GM10248 (cell line): ENCODE measurements at regions of chr4 and their contacts with region 1.

Region 1: DNA sequence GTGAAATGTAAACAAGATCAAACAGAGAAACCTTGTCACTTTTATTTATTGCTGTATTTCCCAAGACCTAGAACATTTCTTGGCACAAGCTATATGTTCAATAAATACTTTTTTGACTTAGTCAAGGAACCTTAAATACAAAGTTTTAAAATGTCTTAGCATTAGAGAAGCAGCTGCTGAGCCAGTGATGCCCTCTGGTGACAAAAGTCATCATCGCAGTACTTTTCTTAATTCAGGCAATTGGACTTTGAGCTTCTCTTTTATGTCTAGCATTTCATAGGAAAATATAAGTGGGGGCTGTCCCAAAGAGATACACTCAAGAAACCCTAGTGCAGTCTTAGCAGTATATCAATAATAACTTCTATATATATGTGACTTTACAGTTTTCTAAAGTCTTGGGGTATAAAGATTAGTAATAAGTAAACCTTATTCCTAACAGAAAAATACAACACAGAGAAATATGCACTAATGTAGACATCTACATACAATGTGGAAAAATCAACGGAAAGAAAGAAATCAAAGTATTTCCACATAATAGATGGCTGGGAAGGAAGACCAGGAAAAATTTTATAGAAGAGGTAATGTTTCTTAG is 118.4 kb downstream of the DTHD1 start:
- DNase-seq: peak; percentile 19
- CTCF ChIP-seq: peak; percentile 82

Region 2: DNA sequence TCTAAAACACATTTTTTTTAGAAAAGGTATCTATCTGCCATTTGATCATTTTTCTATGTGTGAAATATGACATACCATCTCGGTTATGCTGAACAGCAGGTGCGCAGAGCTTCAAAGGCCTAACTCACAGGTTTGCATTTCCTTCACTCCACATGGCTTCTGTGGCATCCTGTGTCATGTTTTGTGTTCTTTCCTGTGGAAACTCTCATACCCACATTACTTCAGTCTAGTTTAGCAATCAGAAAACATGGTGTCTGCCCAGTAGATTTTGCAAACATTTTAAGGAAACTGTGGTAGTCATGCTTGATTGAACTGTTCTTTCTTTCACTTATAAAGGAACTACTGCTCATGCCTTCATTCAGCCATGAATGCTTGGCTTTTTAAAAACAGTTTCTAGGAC is 144.3 kb before region 1 on chr4:
- CTCF ChIA-PET with region 1: interaction called, 15 read pairs
- POLR2A ChIA-PET with region 1: no interaction called
- DNase-seq: peak; percentile 42
- CTCF ChIP-seq: no peak

Region 3: GRCh38 chr4:36332023-36332781 is 67.7 kb before region 1 on chr4:
- CTCF ChIA-PET with region 1: interaction called, 20 read pairs
- POLR2A ChIA-PET with region 1: no interaction called
- DNase-seq: no peak
- CTCF ChIP-seq: no peak

Region 4: DNA sequence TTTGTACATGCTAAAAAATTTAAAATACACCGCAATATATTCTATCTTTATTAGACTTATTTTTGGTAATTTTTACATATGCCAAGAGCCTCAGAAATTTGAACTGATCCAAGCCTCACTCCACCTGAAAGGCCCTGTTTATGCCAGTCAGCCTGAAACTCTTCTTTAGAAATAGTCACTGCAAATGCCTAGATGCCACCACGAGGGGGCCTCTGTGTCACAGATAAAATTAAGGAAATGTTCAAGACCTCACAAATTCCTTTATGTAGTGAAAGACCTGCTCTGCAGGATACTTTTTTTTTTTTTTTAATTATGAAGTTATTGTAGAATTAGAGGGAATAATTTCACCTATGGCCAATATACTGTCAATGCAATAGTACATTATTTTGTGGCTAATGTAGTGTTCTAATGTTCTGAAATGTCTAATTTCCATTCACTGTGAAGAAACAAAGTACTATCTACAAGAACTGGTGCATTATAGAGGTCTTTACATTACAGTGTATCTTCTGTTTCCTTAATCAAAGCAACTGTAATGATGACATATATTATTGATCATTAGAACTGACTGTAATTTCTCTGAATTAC is 48.7 kb before region 1 on chr4:
- CTCF ChIA-PET with region 1: interaction called, 54 read pairs
- POLR2A ChIA-PET with region 1: no interaction called
- DNase-seq: peak; percentile 47
- CTCF ChIP-seq: peak; percentile 80

Region 5: DNA sequence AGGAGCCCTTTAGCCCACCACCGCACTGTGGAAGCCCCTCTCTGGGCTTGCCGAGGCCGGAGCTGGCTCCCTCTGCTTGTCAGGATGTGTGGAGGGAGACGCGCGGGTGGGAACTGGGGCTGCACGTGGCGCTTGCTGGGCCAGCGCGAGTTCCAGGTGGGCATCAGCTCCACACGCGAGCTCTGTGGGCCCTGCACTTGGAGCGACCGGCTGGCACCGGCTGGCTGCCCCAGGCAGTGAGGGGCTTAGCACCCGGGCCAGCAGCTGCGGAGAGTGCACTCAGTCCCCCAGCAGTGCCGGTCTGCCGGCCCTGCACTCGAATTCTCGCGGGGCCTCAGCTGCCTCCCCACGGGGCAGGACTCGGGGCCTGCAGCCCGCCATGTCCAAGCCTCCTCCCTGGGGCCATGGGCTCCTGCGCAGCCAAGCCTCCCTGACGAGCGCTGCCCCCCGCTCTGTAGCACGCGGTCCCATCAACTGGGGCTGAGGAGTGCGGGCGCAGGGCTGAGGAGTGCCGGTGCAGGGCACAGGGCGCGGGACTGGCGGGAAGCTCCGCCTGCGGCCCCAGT is 24.9 kb before region 1 on chr4:
- CTCF ChIA-PET with region 1: interaction called, 13 read pairs
- POLR2A ChIA-PET with region 1: no interaction called
- DNase-seq: no peak
- CTCF ChIP-seq: no peak

Region 6: DNA sequence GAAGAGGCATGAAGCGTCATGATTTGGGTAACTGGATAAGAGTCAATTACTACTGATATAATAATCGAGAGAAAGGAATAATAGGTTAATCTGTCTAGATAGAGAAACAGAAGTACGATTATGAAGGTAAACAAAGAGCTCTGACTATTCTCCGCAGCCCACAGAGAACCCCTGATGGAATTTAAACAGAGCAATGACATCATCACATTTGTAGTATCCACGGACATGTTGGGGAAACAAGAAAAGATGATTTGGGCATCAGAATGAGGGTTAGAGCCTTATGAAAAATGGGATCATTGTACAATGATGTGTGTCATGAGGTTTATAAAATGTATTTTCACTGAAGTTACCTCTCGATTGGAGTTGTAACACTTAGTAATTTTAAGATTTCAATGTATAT is 11.5 kb after region 1 on chr4:
- CTCF ChIA-PET with region 1: interaction called, 16 read pairs
- POLR2A ChIA-PET with region 1: no interaction called
- DNase-seq: no peak
- CTCF ChIP-seq: no peak

Region 7: DNA sequence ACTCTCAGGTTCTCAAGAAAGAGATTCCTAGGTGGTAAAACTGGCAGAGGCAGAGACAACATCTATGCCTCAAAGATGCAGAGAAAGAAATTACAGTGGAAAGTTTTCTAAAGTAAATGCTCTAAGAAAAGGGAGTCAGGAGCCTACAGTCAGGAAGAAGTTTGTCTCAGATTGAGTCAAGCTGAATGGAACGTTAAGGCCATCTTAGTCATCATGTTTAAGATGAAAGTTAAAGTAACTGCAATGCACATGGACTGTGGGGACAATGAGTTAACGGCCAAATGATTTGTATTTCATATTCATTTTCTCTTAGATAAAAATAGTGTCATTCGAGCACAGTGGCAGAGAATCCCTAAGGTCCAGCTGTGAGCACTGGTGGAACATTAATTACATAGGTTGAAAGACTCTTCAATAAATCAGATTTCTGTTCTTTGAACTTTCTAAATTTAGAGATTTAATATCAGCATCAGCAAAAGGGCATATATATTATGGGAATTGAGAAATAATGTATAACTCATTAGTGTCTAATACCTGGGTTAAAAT is 266.2 kb after region 1 on chr4:
- CTCF ChIA-PET with region 1: no interaction called
- POLR2A ChIA-PET with region 1: no interaction called
- DNase-seq: no peak
- CTCF ChIP-seq: no peak